ENCODE measurements at regions of chr20 and their contacts with region 1.

Region 1: GRCh38 chr20:46438156-46438750 is 31.8 kb upstream of the ELMO2 start:
- DNase-seq: peak; percentile 54 to 78 (median 70)
- H3K4me3 ChIP-seq: no peak overlapping the region
- H3K27ac ChIP-seq: no peak overlapping the region
- H3K4me1 ChIP-seq: no peaks in the 10 kb centered on the region
- H3K27me3 ChIP-seq: no peaks in the 10 kb centered on the region

Region 2: GRCh38 chr20:46132705-46133120 is 305.5 kb before region 1 on chr20:
- CTCF ChIA-PET with region 1: interaction called, 18 read pairs
- POLR2A ChIA-PET with region 1: no interaction called
- DNase-seq: peak; percentile 60 to 77 (median 73)
- H3K4me3 ChIP-seq: no peak overlapping the region
- H3K27ac ChIP-seq: no peak overlapping the region
- H3K4me1 ChIP-seq: no peaks in the 10 kb centered on the region
- H3K27me3 ChIP-seq: peaks cover 3 to 30% (median 8%) of the 10 kb centered on the region in 5 experiments

Region 3: DNA sequence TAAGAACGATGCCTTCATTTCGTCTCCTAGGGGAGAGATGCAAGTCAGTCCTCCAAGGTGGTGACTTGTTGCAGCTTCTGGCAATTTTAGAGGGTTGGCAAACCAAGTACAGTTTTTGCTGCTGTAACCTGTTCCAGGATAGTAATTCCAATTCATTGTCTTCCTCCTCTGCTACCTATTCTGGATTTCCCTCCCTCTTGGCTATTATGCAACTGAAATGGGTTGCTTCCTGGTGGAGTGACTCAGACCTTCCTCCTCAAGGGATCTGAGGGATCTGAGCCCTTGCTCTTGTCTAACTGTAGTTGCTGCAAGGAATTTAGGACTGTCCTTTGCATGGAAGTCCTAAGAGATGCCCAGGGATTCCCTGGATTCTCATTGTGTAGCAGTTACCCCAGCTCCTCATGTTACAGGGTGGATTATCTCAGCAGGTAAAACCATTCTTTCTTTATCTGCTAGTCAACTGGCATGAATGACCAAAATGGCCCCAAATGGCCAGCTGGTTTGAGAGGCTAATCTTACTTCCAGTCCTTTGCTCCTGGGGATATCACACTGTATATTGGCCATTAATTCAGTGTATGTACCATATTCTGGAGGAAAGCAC is 14.3 kb before region 1 on chr20:
- CTCF ChIA-PET with region 1: interaction called, 10 read pairs
- POLR2A ChIA-PET with region 1: no interaction called
- DNase-seq: no peak
- H3K4me3 ChIP-seq: no peak overlapping the region
- H3K27ac ChIP-seq: no peak overlapping the region
- H3K4me1 ChIP-seq: no peaks in the 10 kb centered on the region
- H3K27me3 ChIP-seq: peaks cover 0 to 3% (median 0%) of the 10 kb centered on the region in 5 experiments

Region 4: DNA sequence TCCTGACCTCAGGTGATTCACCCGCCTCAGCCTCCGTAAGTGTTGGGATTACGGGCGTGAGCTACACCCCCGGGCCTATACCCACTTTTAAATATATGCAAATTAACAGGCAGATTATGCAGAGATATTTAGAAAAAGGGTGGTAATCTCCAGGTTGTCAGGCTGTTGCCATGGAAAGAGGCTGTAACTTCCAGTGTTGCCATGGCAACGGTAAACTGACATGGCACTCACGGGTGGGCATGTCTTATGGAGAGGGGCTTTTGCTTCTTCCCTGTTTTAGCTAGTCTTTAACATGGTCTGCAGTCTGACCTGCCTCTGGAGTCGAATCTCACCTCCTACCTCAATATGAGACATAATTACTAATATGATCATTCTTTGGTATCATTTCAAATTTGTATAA is 30.3 kb after region 1 on chr20:
- CTCF ChIA-PET with region 1: no interaction called
- POLR2A ChIA-PET with region 1: no interaction called
- DNase-seq: no peak
- H3K4me3 ChIP-seq: no peak overlapping the region
- H3K27ac ChIP-seq: no peak overlapping the region
- H3K4me1 ChIP-seq: no peaks in the 10 kb centered on the region
- H3K27me3 ChIP-seq: no peaks in the 10 kb centered on the region

Measured in common myeloid progenitor, CD34-positive (primary cell).